GM10248 (cell line): ENCODE measurements at regions of chr6 and their contacts with region 1.

Region 1: DNA sequence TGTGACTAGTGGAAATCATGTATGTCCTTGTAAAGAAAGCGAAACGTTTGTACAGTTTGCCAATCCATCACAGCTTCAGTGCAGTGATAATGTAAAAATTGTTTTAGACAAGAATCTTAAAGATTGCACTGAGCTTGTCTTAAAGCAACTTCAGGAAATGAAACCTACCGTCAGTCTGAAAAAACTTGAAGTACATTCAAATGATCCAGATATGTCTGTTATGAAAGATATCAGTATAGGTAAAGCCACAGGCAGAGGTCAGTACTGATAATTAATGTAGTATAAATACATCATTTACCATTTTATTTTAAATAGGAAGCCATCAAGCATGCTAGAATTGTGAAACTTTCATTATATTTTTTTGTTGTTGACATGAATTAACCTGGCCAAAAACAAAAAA is 60.9 kb upstream of the SMIM8 start:
- DNase-seq: no peak
- CTCF ChIP-seq: no peak

Region 2: GRCh38 chr6:87277123-87277522 is 15.6 kb after region 1 on chr6:
- CTCF ChIA-PET with region 1: interaction called, 11 read pairs
- POLR2A ChIA-PET with region 1: no interaction called
- DNase-seq: no peak
- CTCF ChIP-seq: peak; percentile 49